ENCODE measurements at regions of chr19 and their contacts with region 1.

Region 1: DNA sequence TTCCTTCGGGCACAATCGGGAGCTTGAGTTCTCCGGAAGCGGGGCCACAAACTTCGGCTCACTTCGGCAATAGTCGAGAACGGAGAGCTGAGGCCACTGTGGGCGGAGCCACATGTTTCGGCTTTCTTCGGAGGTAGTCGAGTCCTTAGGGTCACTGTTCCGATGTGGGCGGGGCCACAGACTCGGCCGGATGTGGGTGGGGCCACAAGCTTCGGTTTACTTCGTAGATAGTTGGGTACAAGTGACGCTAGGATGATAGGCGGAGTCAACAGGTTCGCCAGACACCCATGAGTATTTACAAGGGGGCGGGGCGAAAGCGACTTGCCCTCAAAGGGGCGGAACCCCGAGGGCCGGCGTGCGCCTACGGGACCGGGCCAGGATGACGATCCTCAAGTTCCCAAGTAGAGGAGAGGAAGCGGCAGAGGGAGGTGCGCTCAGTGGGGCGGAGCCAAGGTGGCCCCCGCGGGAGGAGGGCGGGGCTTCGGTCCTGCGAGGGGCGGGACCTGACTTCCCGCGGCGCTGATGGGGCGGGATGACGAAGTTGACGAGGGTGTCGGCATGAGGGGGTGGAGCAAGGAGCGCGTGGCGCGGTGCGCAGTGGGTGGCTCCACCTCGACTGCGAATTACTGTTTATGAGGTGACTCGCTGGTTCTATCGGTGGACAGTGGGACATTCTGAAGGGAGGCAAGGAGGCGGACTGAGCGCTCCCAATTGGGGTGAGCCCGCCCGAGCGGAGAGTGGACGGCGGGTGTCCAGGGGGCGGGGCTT is 539 bp upstream of the MBOAT7 start:
- DNase-seq: peak; percentile 100
- ATAC-seq: peak; percentile 91
- H3K4me3 ChIP-seq: peak overlapping the region in 1 of 2 donors; percentile 20
- H3K27ac ChIP-seq: peak overlapping the region; percentile 47 to 94
- H3K4me1 ChIP-seq: no peaks in the 10 kb centered on the region
- H3K27me3 ChIP-seq: no peaks in the 10 kb centered on the region

Region 2: DNA sequence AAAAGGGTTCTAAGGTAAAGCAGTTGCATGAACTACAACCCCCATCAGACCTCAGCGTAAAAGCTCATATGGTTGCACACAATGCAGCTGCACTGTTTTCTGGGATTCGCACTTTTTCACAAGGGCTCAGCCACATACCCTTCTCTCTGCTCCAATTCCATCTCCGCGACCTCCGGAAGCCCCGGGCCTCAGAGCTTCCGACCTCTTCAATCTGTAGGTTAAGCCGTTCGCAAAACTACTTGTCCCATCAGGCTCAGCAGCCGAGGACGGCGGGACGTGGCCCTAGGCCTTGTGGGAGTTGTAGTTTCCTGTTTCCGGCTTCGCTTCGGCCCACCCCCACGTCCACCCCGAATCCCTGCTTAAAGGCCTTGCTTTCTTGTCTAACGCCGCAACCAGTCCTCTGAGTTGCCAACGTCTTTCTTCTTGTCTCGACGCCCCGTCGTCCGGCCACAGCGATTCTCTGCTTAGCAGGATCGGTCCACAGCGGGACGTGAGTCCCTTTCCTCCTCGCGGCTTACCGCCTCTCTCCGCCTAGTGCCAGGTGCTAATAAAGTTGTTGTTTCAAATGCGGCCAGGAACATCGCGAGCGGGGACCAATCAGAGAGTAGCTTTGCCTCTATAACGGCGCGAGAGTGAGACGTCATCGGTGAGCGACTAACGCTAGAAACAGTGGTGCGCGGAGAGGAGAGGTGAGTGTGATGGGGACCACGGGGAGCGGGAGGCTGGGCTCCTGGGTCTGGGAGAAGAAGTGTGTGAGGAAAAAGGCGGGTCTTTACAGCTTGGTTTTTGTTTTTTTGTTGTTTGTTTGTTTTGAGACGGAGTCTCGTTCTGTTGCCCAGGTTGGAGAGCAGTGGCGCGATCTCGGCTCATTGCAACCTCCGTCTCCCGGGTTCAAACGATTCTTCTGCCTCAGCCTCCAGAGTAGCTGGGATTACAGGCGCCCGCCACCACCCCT is 74.5 kb before region 1 on chr19 and contains the starts of genes PRPF31 and TFPT:
- intact Hi-C with region 1: loop called in 1 of 2 experiments (anchors 5 kb)
- DNase-seq: peak; percentile 98
- ATAC-seq: peak; percentile 97
- H3K4me3 ChIP-seq: peak within 1 kb of the TSS; percentile 41 to 59
- H3K27ac ChIP-seq: peak within 1 kb of the TSS in 1 of 2 donors; percentile 51
- H3K4me1 ChIP-seq: no peaks in the 10 kb centered on the region
- H3K27me3 ChIP-seq: no peaks in the 10 kb centered on the region
- total RNA-seq, gene PRPF31: 41.5 to 50.4 TPM
- total RNA-seq, gene TFPT: 12.9 to 17.3 TPM

Region 3: GRCh38 chr19:54248016-54248601 is 58.2 kb after region 1 on chr19:
- intact Hi-C with region 1: no loop called
- DNase-seq: peak in 1 of 2 donors; percentile 78
- ATAC-seq: peak; percentile 52
- H3K4me3 ChIP-seq: no peak overlapping the region
- H3K27ac ChIP-seq: no peak overlapping the region
- H3K4me1 ChIP-seq: no peaks in the 10 kb centered on the region
- H3K27me3 ChIP-seq: no peaks in the 10 kb centered on the region

Measured in aorta (tissue), 5 donors.